Ascending aorta (tissue), 2 donors: ENCODE measurements at regions of chr18 and their contacts with region 1.

Region 1: GRCh38 chr18:63367053-63367953 is at the start of gene KDSR:
- DNase-seq: peak; percentile 85 to 98
- H3K4me3 ChIP-seq: peak within 1 kb of the TSS; percentile 87 to 92
- H3K27ac ChIP-seq: peak within 1 kb of the TSS; percentile 98
- H3K4me1 ChIP-seq: peaks cover 2 to 19% of the 10 kb centered on the region in 2 donors
- H3K27me3 ChIP-seq: no peaks in the 10 kb centered on the region
- CTCF ChIP-seq: no peak
- total RNA-seq, gene KDSR: 208 TPM

Region 2: DNA sequence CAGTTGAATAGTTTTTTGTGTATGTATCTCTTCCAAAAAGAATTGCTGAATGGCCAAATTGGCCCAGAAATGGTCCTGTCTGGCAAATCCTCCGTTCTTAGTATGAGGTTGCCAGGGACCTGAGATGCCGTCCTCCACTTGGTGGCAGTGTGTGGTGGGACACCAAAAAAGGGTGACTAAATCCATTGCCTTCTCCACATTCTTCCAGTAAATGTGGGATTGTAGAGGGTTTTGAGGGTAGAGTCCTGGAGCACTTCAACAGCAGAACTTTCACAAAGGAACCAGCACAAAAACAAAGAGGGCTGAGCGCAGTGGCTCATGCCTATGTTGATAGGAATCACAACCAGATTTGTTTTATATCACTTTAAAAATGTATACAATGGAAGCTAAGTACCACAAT is 247.7 kb before region 1 on chr18:
- intact Hi-C with region 1: loop called (anchors 1 kb)
- DNase-seq: no peak
- H3K4me3 ChIP-seq: no peak overlapping the region
- H3K27ac ChIP-seq: no peak overlapping the region
- H3K4me1 ChIP-seq: peaks cover 0 to 2% of the 10 kb centered on the region in 2 donors
- H3K27me3 ChIP-seq: no peaks in the 10 kb centered on the region
- CTCF ChIP-seq: peak; percentile 14 to 57 (median 44)

Region 3: DNA sequence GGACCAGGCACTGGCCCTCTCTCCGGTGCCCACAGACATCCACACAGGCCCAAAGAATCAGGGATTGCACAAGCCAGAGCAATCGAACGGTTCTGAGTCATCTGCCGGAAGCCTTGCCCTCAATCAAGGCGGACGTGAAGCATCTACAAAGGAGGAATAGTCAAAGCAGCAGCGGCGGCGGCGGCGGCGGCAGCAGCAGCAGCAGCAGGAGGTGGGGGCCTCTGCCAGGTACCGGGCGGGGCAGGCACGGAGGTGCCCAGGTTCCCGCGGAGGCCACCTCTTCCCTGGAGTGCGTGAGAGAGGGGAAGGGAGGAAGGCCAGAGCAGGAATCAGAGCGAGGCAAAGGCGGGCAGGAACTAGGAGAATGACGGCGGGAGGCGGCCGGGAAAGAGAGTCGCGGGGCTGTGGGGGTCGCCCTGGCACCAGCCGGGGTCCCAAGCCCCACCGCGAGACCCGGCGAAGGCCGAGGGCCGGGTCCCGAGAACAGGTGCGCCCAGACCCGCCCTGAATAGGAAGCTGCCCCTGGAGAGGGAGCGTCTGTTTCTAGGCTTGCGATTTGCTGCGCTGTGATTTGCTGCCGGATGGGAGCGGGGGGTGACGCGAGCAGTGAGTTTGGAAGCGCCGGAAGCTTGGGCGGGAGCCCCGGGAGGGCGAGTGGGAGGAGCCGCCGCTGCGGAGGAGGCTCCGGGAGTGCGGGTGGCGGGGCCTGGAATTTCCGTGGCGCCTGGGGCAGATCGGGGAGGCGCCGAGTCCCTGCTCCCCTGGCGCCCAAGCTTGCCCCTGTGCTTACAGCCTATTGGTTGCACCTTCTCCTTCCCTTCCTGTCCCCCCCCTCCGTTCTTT is 602.9 kb after region 1 on chr18 and contains the start of gene SERPINB8:
- intact Hi-C with region 1: loop called (anchors 5 kb)
- DNase-seq: peak; percentile 76 to 98
- H3K4me3 ChIP-seq: peak within 1 kb of the TSS; percentile 77 to 80
- H3K27ac ChIP-seq: peak within 1 kb of the TSS; percentile 97 to 99
- H3K4me1 ChIP-seq: peaks cover 0 to 4% of the 10 kb centered on the region in 2 donors
- H3K27me3 ChIP-seq: no peaks in the 10 kb centered on the region
- CTCF ChIP-seq: no peak
- total RNA-seq, gene SERPINB8: 4.5 TPM

Region 4: DNA sequence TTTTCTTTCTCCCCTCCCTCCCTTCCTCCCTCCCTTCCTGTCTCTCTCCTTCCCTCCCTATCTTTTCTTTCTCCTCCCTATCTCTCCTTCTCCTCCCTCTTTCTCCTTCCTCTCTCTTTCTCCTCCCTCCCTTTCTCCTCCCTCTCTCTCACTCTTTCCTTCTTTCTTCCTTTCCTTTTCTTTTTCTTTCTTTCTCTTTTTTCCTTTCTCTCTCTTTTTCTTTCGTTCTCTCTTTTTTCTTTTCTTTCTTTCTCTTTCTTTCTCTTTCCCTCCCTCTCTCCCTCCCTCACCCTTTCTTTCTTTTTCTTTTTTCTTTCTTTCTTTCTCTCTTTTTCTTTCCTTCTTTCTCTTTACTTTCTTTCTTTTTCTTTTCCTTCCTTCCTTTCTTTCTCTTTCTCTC is 951.2 kb after region 1 on chr18:
- intact Hi-C with region 1: no loop called
- DNase-seq: no peak
- H3K4me3 ChIP-seq: no peak overlapping the region
- H3K27ac ChIP-seq: no peak overlapping the region
- H3K4me1 ChIP-seq: no peaks in the 10 kb centered on the region
- H3K27me3 ChIP-seq: no peaks in the 10 kb centered on the region
- CTCF ChIP-seq: no peak